OCI-LY7 (cell line): ENCODE measurements at regions of chr17 and their contacts with region 1.

Region 1: DNA sequence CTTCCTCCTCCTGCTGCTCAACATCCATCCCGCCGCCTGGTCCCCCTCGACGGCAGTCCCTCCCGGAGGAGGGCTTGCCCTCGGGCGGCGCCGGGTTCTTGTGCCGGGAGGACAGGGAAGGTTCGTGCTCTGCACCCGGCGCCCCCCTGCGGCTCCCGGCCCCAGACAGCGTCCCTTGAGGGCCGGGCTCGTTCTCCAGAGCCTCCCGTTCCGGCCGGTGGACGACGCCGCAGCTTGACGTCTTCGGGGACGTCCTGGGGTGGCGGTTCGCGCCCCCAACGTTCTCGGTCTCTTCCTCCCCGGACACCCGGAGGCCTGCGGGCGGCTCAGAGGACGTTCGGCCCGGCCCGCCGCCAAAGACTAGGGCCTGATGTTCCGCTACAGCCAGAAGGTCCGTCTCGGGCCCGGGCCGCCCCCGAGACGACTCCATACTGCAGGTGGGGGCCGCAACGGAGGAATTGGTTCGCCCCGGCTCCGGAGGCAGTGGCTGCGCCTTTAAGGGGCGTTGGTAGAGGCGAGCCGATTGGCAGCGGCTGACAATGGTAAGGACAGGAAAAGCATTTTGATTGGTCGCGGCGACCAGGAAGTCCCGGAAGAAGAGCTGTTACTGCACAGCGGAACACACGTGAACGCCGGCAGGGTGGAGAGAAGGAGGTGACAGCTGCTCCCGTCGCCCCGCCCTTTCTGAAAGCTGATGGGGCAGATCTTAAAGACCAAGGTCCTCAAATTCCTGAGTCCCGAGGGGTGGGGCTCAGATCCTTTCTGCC is at the start of gene BORCS6:
- DNase-seq: peak; percentile 99
- H3K4me3 ChIP-seq: peak within 1 kb of the TSS; percentile 83
- H3K27ac ChIP-seq: peak within 1 kb of the TSS; percentile 92
- H3K4me1 ChIP-seq: peaks cover 39% of the 10 kb centered on the region
- CTCF ChIP-seq: peak; percentile 52
- total RNA-seq, gene BORCS6: 13.9 and 14.3 TPM in 2 replicates

Region 2: GRCh38 chr17:8156246-8156992 is 33.5 kb before region 1 on chr17:
- CTCF ChIA-PET with region 1: no interaction called
- POLR2A ChIA-PET with region 1: interaction called, 4 read pairs
- intact Hi-C with region 1: loop called (anchors 1 kb)
- DNase-seq: peak; percentile 100
- H3K4me3 ChIP-seq: peak overlapping the region; percentile 75
- H3K27ac ChIP-seq: peak overlapping the region; percentile 80
- H3K4me1 ChIP-seq: peaks cover 60% of the 10 kb centered on the region
- CTCF ChIP-seq: peak; percentile 43; the same call in 1 of the 2 replicates

Region 3: GRCh38 chr17:8166731-8167130 is 23.2 kb before region 1 on chr17:
- CTCF ChIA-PET with region 1: no interaction called
- POLR2A ChIA-PET with region 1: no interaction called
- intact Hi-C with region 1: no loop called
- DNase-seq: no peak
- H3K4me3 ChIP-seq: no peak overlapping the region
- H3K27ac ChIP-seq: no peak overlapping the region
- H3K4me1 ChIP-seq: peaks cover 24% of the 10 kb centered on the region
- CTCF ChIP-seq: no peak

Region 4: GRCh38 chr17:8209909-8210760 is 20.2 kb after region 1 on chr17 and contains the start of gene AURKB:
- CTCF ChIA-PET with region 1: interaction called, 3 read pairs
- POLR2A ChIA-PET with region 1: interaction called, 75 read pairs
- intact Hi-C with region 1: loop called (anchors 1 kb)
- DNase-seq: peak; percentile 96
- H3K4me3 ChIP-seq: peak within 1 kb of the TSS; percentile 92
- H3K27ac ChIP-seq: peak within 1 kb of the TSS; percentile 88
- H3K4me1 ChIP-seq: peaks cover 19% of the 10 kb centered on the region
- CTCF ChIP-seq: no peak
- total RNA-seq, gene AURKB: 248 and 283 TPM in 2 replicates

Region 5: GRCh38 chr17:8900626-8901585 is 711.0 kb after region 1 on chr17:
- CTCF ChIA-PET with region 1: no interaction called
- POLR2A ChIA-PET with region 1: no interaction called
- intact Hi-C with region 1: no loop called
- DNase-seq: no peak
- H3K4me3 ChIP-seq: no peak overlapping the region
- H3K27ac ChIP-seq: no peak overlapping the region
- H3K4me1 ChIP-seq: peaks cover 37% of the 10 kb centered on the region
- CTCF ChIP-seq: peak; percentile 30; the same call in 1 of the 2 replicates